ENCODE measurements at regions of chr4 and their contacts with region 1.

Region 1: GRCh38 chr4:3037957-3038461 is 36.3 kb downstream of the HTT-AS start:
- DNase-seq: peak; percentile 6
- H3K4me3 Mint-ChIP-seq: peak overlapping the region; percentile 57
- H3K27ac Mint-ChIP-seq: peak overlapping the region; percentile 18
- H3K4me1 Mint-ChIP-seq: peaks cover 34% of the 10 kb centered on the region
- H3K27me3 Mint-ChIP-seq: peaks cover 28% of the 10 kb centered on the region

Region 2: GRCh38 chr4:2977211-2978088 is 60.6 kb before region 1 on chr4:
- intact Hi-C with region 1: loop called (anchors 1 kb)
- DNase-seq: no peak
- H3K4me3 Mint-ChIP-seq: no peak overlapping the region
- H3K27ac Mint-ChIP-seq: no peak overlapping the region
- H3K4me1 Mint-ChIP-seq: no peaks in the 10 kb centered on the region
- H3K27me3 Mint-ChIP-seq: peaks cover 6% of the 10 kb centered on the region

Region 3: DNA sequence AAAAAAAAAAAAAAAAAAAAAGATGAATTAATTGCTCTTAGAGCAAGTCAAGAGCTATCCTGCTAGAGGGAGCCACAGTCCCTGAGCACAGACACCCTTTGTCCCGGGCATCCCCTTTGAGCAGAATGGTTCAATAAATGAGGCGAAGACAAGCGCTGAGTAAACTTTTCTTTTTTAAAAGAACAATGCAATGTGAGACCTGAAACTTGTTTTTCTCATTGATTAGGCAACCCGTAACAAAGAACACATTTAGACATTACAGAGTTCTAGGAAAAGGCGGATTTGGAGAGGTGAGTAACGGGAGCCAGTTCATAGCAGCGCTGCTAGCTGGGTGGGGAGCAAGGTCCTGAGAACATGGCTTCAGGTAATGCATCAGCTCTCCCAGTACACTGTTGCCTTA is 28.6 kb before region 1 on chr4:
- intact Hi-C with region 1: loop called (anchors 1 kb)
- DNase-seq: no peak
- H3K4me3 Mint-ChIP-seq: no peak overlapping the region
- H3K27ac Mint-ChIP-seq: no peak overlapping the region
- H3K4me1 Mint-ChIP-seq: peaks cover 10% of the 10 kb centered on the region
- H3K27me3 Mint-ChIP-seq: peaks cover 11% of the 10 kb centered on the region